CD8-positive, alpha-beta T cell (primary cell): ENCODE measurements at regions of chr10 and their contacts with region 1.

Region 1: GRCh38 chr10:118754720-118755480 is at the start of gene CACUL1:
- DNase-seq: peak; percentile 99 to 100 (median 100)
- ATAC-seq: peak; percentile 97
- H3K4me3 ChIP-seq: peak within 1 kb of the TSS; percentile 86 to 92
- H3K4me3 Mint-ChIP-seq: peak within 1 kb of the TSS; percentile 93
- H3K27ac ChIP-seq: peak within 1 kb of the TSS; percentile 79 to 83
- H3K27ac Mint-ChIP-seq: peak within 1 kb of the TSS; percentile 92
- H3K4me1 ChIP-seq: peaks cover 29% of the 10 kb centered on the region
- H3K4me1 Mint-ChIP-seq: peaks cover 36% of the 10 kb centered on the region
- H3K27me3 ChIP-seq: peaks cover 0 to 2% of the 10 kb centered on the region in 2 experiments
- H3K27me3 Mint-ChIP-seq: no peaks in the 10 kb centered on the region
- CTCF ChIP-seq: no peak
- total RNA-seq, gene CACUL1: 40.8 to 46.8 TPM

Region 2: GRCh38 chr10:117375360-117376178 is 1379.3 kb before region 1 on chr10 and contains the start of gene PDZD8:
- CTCF ChIA-PET with region 1: no interaction called
- POLR2A ChIA-PET with region 1: no interaction called
- intact Hi-C with region 1: loop called (anchors 5 kb)
- DNase-seq: peak; percentile 77 to 96 (median 92)
- ATAC-seq: peak; percentile 76
- H3K4me3 ChIP-seq: peak within 1 kb of the TSS; percentile 87 to 95
- H3K4me3 Mint-ChIP-seq: peak within 1 kb of the TSS; percentile 95
- H3K27ac ChIP-seq: peak within 1 kb of the TSS; percentile 73 to 83
- H3K27ac Mint-ChIP-seq: peak within 1 kb of the TSS; percentile 95
- H3K4me1 ChIP-seq: peaks cover 26% of the 10 kb centered on the region
- H3K4me1 Mint-ChIP-seq: peaks cover 37% of the 10 kb centered on the region
- H3K27me3 ChIP-seq: peaks cover 0 to 5% of the 10 kb centered on the region in 2 experiments
- H3K27me3 Mint-ChIP-seq: peaks cover 25% of the 10 kb centered on the region
- CTCF ChIP-seq: no peak
- total RNA-seq, gene PDZD8: 49.6 to 59.8 TPM

Region 3: DNA sequence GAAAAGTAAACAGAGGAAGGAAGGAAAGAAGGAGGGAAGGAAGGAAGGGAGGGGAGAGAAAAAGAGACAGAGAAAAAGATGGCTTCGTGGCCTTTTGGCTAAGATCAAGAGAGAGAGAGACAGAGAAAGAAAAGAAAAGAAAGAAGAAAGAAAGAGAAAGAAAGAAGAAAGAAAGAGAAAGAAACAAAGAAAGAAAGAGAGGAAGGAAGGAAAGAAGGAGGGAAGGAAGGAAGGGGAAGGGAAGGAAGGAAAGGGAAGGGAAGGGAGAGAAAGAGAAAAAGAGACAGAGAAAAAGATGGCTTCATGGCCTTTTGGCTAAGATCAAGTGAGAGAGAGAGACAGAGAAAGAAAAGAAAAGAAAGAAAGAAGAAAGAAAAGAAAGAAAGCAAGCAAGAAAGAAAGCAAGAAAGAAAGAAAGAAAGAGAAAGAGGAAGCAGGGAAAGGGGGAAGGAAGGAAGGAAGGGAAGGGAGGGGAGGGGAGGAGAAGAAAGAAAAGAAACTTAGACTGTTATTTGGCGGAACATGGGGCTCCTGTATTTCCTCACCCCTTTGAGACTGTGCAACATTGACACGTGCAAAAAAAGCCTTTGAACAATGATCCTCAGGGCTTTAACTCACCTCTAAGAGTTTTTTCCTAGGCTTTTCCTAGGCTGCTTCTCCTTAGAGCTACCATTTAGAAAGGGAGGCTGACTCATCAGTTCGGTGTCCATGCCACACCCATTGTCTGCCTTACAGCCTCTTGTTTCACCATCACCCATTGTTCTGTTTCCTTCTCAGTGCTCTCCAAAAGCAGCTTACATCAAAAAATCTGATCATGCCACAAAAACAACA is 250.6 kb before region 1 on chr10:
- CTCF ChIA-PET with region 1: no interaction called
- POLR2A ChIA-PET with region 1: no interaction called
- intact Hi-C with region 1: no loop called
- DNase-seq: no peak
- ATAC-seq: no peak
- H3K4me3 ChIP-seq: no peak overlapping the region
- H3K4me3 Mint-ChIP-seq: no peak overlapping the region
- H3K27ac ChIP-seq: no peak overlapping the region
- H3K27ac Mint-ChIP-seq: no peak overlapping the region
- H3K4me1 ChIP-seq: no peaks in the 10 kb centered on the region
- H3K4me1 Mint-ChIP-seq: no peaks in the 10 kb centered on the region
- H3K27me3 ChIP-seq: no peaks in the 10 kb centered on the region
- H3K27me3 Mint-ChIP-seq: peaks cover 16% of the 10 kb centered on the region
- CTCF ChIP-seq: no peak

Region 4: DNA sequence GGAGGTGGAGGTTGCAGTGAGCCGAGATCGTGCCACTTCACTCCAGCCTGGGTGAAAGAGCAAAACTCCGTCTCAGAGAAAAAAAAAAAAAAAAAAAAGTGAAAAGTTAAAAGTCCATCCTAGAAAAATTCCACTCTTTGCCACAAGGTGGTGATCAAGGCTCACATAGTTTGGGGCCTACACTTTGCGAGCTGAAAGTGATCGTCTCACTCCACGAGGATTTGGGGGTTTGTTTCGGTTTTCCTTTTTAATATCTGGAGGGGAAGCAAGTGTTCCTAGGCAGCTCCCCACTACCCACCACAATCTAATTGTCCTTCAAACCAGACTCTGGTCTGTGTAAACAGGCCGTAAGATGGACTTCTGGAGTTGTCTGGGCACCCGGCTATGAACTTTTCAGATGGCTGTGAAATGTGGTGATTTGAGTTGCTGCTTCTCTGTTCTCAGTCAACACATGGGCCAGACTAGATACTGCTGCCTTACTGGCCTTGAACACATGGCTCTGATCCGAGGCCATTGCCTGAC is 186.5 kb before region 1 on chr10:
- CTCF ChIA-PET with region 1: interaction called, 9 read pairs
- POLR2A ChIA-PET with region 1: interaction called, 4 read pairs
- intact Hi-C with region 1: loop called in 1 of 2 experiments (anchors 1 kb)
- DNase-seq: peak; percentile 9 to 82 (median 52)
- ATAC-seq: peak; percentile 80
- H3K4me3 ChIP-seq: no peak overlapping the region
- H3K4me3 Mint-ChIP-seq: no peak overlapping the region
- H3K27ac ChIP-seq: no peak overlapping the region
- H3K27ac Mint-ChIP-seq: no peak overlapping the region
- H3K4me1 ChIP-seq: peaks cover 5% of the 10 kb centered on the region
- H3K4me1 Mint-ChIP-seq: peaks cover 6% of the 10 kb centered on the region
- H3K27me3 ChIP-seq: no peaks in the 10 kb centered on the region
- H3K27me3 Mint-ChIP-seq: no peaks in the 10 kb centered on the region
- CTCF ChIP-seq: peak; percentile 72

Region 5: DNA sequence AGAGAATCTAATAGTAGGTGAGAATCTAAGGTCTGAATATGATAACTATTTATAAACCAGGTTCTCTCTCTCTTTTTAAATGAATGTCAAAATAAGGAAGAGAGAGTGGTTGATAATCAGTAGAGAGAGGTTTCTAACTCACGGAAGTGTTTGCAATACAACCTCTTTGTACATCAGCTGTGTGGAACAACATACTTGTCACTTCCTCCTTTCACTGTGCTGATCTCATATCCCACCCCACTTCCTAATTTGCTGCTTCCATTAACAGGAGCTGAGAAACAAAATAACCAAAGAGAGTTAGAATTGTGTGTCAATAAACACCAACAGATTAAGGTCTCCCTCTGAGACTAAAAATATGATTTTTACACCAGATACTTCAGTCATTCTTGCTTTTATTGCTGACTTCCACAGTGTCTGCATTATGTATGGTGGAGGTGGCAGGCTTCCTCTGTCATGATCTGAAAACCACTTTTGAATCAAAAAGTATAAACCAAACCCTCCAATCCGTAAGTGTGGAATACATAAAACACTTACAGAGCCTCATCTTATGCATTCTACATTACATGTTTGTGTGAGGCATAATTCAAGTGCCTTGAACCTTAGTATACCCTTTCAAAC is 25.1 kb before region 1 on chr10:
- CTCF ChIA-PET with region 1: interaction called, 5 read pairs
- POLR2A ChIA-PET with region 1: interaction called, 16 read pairs
- intact Hi-C with region 1: loop called (anchors 2 kb)
- DNase-seq: peak in 2 of 9 experiments; percentile 39 to 66
- ATAC-seq: peak; percentile 74
- H3K4me3 ChIP-seq: no peak overlapping the region
- H3K4me3 Mint-ChIP-seq: peak overlapping the region; percentile 3
- H3K27ac ChIP-seq: peak overlapping the region; percentile 35 to 53
- H3K27ac Mint-ChIP-seq: peak overlapping the region; percentile 79
- H3K4me1 ChIP-seq: peaks cover 57% of the 10 kb centered on the region
- H3K4me1 Mint-ChIP-seq: peaks cover 71% of the 10 kb centered on the region
- H3K27me3 ChIP-seq: no peaks in the 10 kb centered on the region
- H3K27me3 Mint-ChIP-seq: no peaks in the 10 kb centered on the region
- CTCF ChIP-seq: no peak

Region 6: GRCh38 chr10:119178372-119179119 is 423.6 kb after region 1 on chr10 and contains the start of gene PRDX3:
- CTCF ChIA-PET with region 1: interaction called, 3 read pairs
- POLR2A ChIA-PET with region 1: no interaction called
- intact Hi-C with region 1: loop called in 1 of 2 experiments (anchors 2 kb)
- DNase-seq: peak; percentile 85 to 94 (median 93)
- ATAC-seq: peak; percentile 99
- H3K4me3 ChIP-seq: peak within 1 kb of the TSS; percentile 85 to 93
- H3K4me3 Mint-ChIP-seq: peak within 1 kb of the TSS; percentile 89
- H3K27ac ChIP-seq: peak within 1 kb of the TSS; percentile 73 to 75
- H3K27ac Mint-ChIP-seq: peak within 1 kb of the TSS; percentile 95
- H3K4me1 ChIP-seq: peaks cover 20% of the 10 kb centered on the region
- H3K4me1 Mint-ChIP-seq: peaks cover 35% of the 10 kb centered on the region
- H3K27me3 ChIP-seq: no peaks in the 10 kb centered on the region
- H3K27me3 Mint-ChIP-seq: no peaks in the 10 kb centered on the region
- CTCF ChIP-seq: no peak
- total RNA-seq, gene PRDX3: 7.6 to 11.7 TPM

Region 7: DNA sequence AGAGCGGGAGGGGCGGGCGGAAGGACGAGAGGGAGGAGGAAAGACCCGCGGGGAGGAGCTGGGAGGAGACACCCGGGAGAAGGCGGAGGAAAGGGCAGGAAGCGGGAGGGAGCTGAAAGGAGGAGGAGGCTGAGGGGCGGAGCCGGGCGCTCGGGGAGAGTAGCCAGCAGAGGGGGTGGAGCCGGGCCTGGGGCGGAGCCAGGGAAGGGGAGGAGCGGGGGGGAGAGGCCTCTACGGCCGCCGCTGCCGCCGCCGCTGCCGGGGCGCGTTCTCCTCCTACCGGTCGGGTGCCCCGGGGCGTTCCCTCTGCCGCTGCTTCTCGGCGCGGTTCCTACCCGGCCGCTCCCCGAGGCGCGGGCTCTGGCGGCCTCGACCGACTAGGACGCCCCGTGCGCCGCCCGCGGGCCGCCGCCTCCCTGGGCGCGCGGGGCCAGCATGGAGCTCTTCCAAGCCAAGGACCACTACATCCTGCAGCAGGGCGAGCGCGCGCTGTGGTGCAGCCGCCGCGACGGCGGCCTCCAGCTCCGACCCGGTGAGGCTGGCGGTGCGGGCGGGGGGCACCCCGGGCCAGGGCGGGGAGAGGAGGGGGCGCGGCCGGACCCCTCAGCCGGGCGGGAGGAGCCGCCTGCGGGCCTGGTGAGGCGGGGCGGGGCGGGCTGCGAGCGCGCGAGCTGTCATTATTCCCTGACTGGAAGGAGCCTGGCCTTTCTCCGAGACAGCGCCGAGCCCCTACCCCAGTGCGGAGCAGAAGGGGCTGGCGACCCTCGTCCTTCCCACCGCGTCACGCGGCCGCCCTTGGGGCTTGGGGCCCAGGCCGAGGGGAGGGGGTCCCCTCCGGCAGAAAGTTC is 971.2 kb after region 1 on chr10 and contains the start of gene INPP5F:
- CTCF ChIA-PET with region 1: no interaction called
- POLR2A ChIA-PET with region 1: interaction called, 4 read pairs
- intact Hi-C with region 1: loop called (anchors 2 kb)
- DNase-seq: peak; percentile 95 to 100 (median 98)
- ATAC-seq: peak; percentile 95
- H3K4me3 ChIP-seq: peak within 1 kb of the TSS; percentile 64 to 81
- H3K4me3 Mint-ChIP-seq: peak within 1 kb of the TSS; percentile 90
- H3K27ac ChIP-seq: peak within 1 kb of the TSS; percentile 33 to 44
- H3K27ac Mint-ChIP-seq: peak within 1 kb of the TSS; percentile 81
- H3K4me1 ChIP-seq: peaks cover 16% of the 10 kb centered on the region
- H3K4me1 Mint-ChIP-seq: peaks cover 27% of the 10 kb centered on the region
- H3K27me3 ChIP-seq: no peaks in the 10 kb centered on the region
- H3K27me3 Mint-ChIP-seq: no peaks in the 10 kb centered on the region
- CTCF ChIP-seq: no peak
- total RNA-seq, gene INPP5F: 3.8 to 6.5 TPM